ENCODE measurements at regions of chr18 and their contacts with region 1.

Region 1: GRCh38 chr18:50819728-50820378 is at the start of gene MRO:
- DNase-seq: no peak
- ATAC-seq: peak; percentile 95
- H3K4me3 ChIP-seq: peak within 1 kb of the TSS; percentile 39 to 60
- H3K27ac ChIP-seq: no peak within 1 kb of the TSS
- H3K4me1 ChIP-seq: peaks cover 3 to 22% of the 10 kb centered on the region in 2 experiments; a peak in 3 of 4 replicates
- H3K27me3 ChIP-seq: no peaks in the 10 kb centered on the region
- CTCF ChIP-seq: peak; percentile 78 to 98 (median 93)
- POLR2A ChIP-seq: no peak
- RAD21 ChIP-seq: peak; percentile 98
- total RNA-seq, gene MRO: 0.84 TPM

Region 2: DNA sequence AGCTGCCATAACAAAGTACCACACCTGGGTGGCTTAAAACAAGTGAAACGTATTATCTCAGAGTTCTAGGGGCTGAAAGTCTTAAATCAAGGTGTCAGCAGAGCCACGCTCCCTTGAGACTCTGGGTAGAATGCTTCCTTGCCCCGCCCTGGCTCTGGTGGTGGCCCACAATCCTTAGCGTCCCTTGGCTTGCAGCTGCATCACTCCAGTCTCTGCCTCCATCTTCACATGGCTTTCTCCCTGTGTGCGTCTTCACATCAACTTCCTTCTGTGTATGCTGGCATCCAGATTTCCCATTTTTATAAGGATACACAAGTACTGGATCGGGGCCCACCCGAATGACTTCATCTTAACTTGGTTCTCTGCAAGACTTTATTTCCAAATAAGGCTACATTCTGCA is 62.5 kb before region 1 on chr18:
- CTCF ChIA-PET with region 1: no interaction called
- POLR2A ChIA-PET with region 1: no interaction called
- RAD21 ChIA-PET with region 1: no interaction called
- intact Hi-C with region 1: no loop called
- DNase-seq: no peak
- ATAC-seq: no peak
- H3K4me3 ChIP-seq: no peak overlapping the region
- H3K27ac ChIP-seq: no peak overlapping the region
- H3K4me1 ChIP-seq: no peaks in the 10 kb centered on the region
- H3K27me3 ChIP-seq: 0 out of 2 replicates have a peak, but pooled peaks cover 6% of the 10 kb centered on the region
- CTCF ChIP-seq: no peak
- POLR2A ChIP-seq: no peak
- RAD21 ChIP-seq: no peak

Region 3: DNA sequence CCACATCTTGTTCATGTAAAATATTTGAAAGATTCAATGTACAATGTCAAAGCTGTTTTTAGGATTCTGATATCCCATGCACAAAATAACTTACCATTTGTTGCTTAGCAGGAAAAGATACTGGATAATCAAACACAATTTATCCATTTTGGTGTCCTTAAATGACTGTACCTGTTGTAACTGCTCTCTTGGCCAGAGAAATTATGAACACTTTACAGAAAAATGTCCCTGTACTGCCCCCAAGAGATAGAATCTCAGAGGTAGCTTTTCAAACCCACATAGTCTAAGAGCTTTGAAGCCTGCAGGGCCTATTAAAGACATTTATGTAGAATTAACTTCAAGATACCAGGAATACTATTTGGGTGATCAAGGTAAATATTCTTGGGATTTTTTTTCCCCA is 46.9 kb after region 1 on chr18:
- CTCF ChIA-PET with region 1: interaction called, 8 read pairs
- POLR2A ChIA-PET with region 1: no interaction called
- RAD21 ChIA-PET with region 1: interaction called in 1 of 2 experiments, 5 read pairs
- intact Hi-C with region 1: loop called (anchors 5 kb)
- DNase-seq: no peak
- ATAC-seq: peak; percentile 45; the same call in 1 of the 2 replicates
- H3K4me3 ChIP-seq: no peak overlapping the region
- H3K27ac ChIP-seq: no peak overlapping the region
- H3K4me1 ChIP-seq: peaks cover 25 to 39% of the 10 kb centered on the region in 2 experiments
- H3K27me3 ChIP-seq: no peaks in the 10 kb centered on the region
- CTCF ChIP-seq: peak; percentile 17 to 40 (median 35); a peak in 3 of 6 replicates
- POLR2A ChIP-seq: no peak
- RAD21 ChIP-seq: peak; percentile 59

Region 4: DNA sequence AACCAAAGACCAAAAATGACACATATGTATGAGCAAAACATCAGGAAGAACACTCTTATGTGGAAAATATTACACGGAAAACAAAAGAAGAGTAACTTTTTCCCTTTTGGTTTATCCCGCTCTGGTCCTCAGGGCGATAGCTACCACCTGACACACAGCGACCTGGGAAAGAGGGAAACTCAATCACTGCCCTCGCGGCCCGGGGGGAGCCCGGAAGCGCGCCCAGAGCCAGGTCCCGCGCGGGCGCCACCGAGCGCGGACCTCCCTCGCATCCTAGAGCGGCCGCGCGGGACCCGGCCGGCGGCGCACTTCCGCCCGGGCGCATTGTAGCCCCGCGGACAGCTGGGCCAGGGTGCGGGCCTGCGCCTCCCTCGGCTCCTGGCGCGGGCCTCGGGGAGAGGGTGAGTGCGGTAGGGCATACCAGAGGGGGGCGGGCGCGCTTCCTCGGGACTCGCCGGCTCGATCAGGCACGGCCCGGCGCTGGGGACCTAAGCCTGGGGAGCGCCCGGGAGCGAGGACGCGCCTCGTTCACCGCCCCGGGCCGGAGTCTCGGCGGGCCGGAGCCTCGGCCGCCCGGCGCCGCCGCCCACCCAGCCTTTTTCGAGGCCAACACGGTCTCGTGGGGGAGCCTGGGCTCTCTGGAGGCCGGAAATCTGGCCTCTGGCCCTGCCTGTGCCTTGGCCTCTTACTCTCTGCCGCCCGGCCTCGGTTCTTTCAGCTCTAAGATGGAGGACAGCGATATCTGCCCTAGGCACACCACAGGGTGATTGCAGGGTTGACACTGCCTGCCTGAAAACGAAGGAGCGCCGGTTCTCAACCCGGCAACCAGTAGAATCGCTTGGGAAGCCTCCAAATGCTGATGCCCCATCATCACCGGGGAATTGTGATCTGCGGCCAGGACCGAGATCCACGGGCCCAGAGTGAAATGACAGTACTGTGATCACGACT is 148.1 kb after region 1 on chr18 and contains the start of gene ELAC1:
- CTCF ChIA-PET with region 1: no interaction called
- POLR2A ChIA-PET with region 1: no interaction called
- RAD21 ChIA-PET with region 1: no interaction called
- intact Hi-C with region 1: loop called (anchors 5 kb)
- DNase-seq: peak; percentile 46
- ATAC-seq: peak; percentile 97
- H3K4me3 ChIP-seq: peak within 1 kb of the TSS; percentile 69 to 92
- H3K27ac ChIP-seq: peak within 1 kb of the TSS; percentile 90
- H3K4me1 ChIP-seq: peaks cover 16 to 27% of the 10 kb centered on the region in 2 experiments; a peak in 3 of 4 replicates
- H3K27me3 ChIP-seq: no peaks in the 10 kb centered on the region
- CTCF ChIP-seq: no peak
- POLR2A ChIP-seq: peak; percentile 80
- RAD21 ChIP-seq: no peak
- total RNA-seq, gene ELAC1: 8.6 TPM

Region 5: GRCh38 chr18:50982802-50983179 is 162.9 kb after region 1 on chr18:
- CTCF ChIA-PET with region 1: no interaction called
- POLR2A ChIA-PET with region 1: no interaction called
- RAD21 ChIA-PET with region 1: interaction called in 1 of 2 experiments, 12 read pairs
- intact Hi-C with region 1: no loop called
- DNase-seq: no peak
- ATAC-seq: 0 out of 2 replicates have a peak, but pooled peaks have one; percentile 50
- H3K4me3 ChIP-seq: no peak overlapping the region
- H3K27ac ChIP-seq: no peak overlapping the region
- H3K4me1 ChIP-seq: peaks cover 2 to 13% of the 10 kb centered on the region in 2 experiments; a peak in 1 of 4 replicates
- H3K27me3 ChIP-seq: no peaks in the 10 kb centered on the region
- CTCF ChIP-seq: peak in 2 of 3 experiments; percentile 13 to 29; a peak in 2 of 6 replicates
- POLR2A ChIP-seq: no peak
- RAD21 ChIP-seq: no peak

Region 6: GRCh38 chr18:51029694-51030536 is 210.1 kb after region 1 on chr18 and contains the start of gene SMAD4:
- CTCF ChIA-PET with region 1: no interaction called
- POLR2A ChIA-PET with region 1: no interaction called
- RAD21 ChIA-PET with region 1: no interaction called
- intact Hi-C with region 1: loop called (anchors 5 kb)
- DNase-seq: peak; percentile 86
- ATAC-seq: peak; percentile 87
- H3K4me3 ChIP-seq: peak within 1 kb of the TSS; percentile 67 to 68
- H3K27ac ChIP-seq: peak within 1 kb of the TSS; percentile 98
- H3K4me1 ChIP-seq: peaks cover 14 to 31% of the 10 kb centered on the region in 2 experiments; a peak in 3 of 4 replicates
- H3K27me3 ChIP-seq: no peaks in the 10 kb centered on the region
- CTCF ChIP-seq: no peak
- POLR2A ChIP-seq: peak; percentile 83
- RAD21 ChIP-seq: no peak
- total RNA-seq, gene SMAD4: 96.3 TPM

Region 7: GRCh38 chr18:51051105-51051712 is 231.4 kb after region 1 on chr18:
- CTCF ChIA-PET with region 1: interaction called, 4 read pairs
- POLR2A ChIA-PET with region 1: no interaction called
- RAD21 ChIA-PET with region 1: no interaction called
- intact Hi-C with region 1: loop called (anchors 1 kb)
- DNase-seq: peak; percentile 38
- ATAC-seq: peak; percentile 98
- H3K4me3 ChIP-seq: no peak overlapping the region
- H3K27ac ChIP-seq: no peak overlapping the region
- H3K4me1 ChIP-seq: no peaks in the 10 kb centered on the region
- H3K27me3 ChIP-seq: no peaks in the 10 kb centered on the region
- CTCF ChIP-seq: peak; percentile 57 to 88 (median 78); a peak in 5 of 6 replicates
- POLR2A ChIP-seq: no peak
- RAD21 ChIP-seq: peak; percentile 66

Measured in HCT116 (cell line).